SK-N-SH (cell line): ENCODE measurements at regions of chr1 and their contacts with region 1.

Region 1: DNA sequence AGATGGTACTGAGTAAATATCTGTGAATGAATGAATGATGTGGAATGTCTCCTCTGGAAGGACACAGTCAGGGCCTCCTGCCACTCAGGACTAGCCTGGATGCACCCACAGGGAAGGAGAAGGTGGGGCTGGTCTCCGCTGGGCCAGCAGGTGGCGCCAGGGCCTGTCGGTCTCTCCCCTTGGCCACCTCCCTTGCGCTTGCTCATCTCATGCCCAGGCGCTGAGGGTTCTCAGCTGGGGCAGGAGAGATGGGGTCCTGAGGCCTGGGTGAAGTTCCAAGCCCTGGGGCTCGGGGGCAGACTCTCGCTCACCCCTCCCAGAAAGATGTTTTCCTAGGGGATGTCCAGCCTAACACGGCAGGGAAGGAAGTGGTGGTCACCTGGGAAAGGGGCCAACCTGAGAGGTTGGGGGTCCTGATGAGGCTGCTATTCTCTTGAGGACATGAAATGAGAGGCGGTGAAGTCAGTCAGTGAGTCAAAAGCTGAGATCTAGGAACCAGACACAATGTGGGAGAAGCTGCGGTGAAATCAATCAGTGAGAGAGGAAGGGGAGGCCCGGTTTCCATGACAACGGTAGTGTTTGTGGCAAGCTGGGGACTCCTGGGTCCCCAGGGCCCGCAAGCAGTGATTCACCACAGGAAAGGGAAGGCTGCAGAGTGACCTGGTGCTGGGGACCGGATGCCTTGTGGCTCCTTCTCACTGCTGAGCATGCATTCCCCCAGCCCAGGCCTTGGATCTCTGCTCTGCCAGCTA is 14.6 kb upstream of the MEX3A start:
- DNase-seq: peak; percentile 89
- H3K4me3 ChIP-seq: no peak overlapping the region; a peak in 1 of 4 replicates
- H3K27ac ChIP-seq: peak overlapping the region; percentile 25 to 85; a peak in 3 of 4 replicates
- H3K4me1 ChIP-seq: peaks cover 13 to 23% of the 10 kb centered on the region in 2 experiments; a peak in 3 of 4 replicates
- H3K27me3 ChIP-seq: no peaks in the 10 kb centered on the region
- CTCF ChIP-seq: peak; percentile 96
- EP300 ChIP-seq: no peak
- RAD21 ChIP-seq: peak; percentile 96

Region 2: GRCh38 chr1:156114101-156114916 is 17.5 kb after region 1 on chr1 and contains the start of gene LMNA:
- CTCF ChIA-PET with region 1: interaction called, 1,559 read pairs
- POLR2A ChIA-PET with region 1: no interaction called
- DNase-seq: peak; percentile 87
- H3K4me3 ChIP-seq: peak within 1 kb of the TSS; percentile 74 to 94
- H3K27ac ChIP-seq: peak within 1 kb of the TSS; percentile 93 to 100
- H3K4me1 ChIP-seq: peaks cover 28 to 42% of the 10 kb centered on the region in 2 experiments; a peak in 3 of 4 replicates
- H3K27me3 ChIP-seq: no peaks in the 10 kb centered on the region
- CTCF ChIP-seq: 0 out of 2 replicates have a peak, but pooled peaks have one; percentile 6
- EP300 ChIP-seq: peak in 1 of 2 experiments; percentile 88; a peak in 1 of 4 replicates
- RAD21 ChIP-seq: no peak
- polyA plus RNA-seq, gene LMNA: 726 and 983 TPM in 2 replicates

Region 3: GRCh38 chr1:156499842-156500546 is 403.2 kb after region 1 on chr1:
- CTCF ChIA-PET with region 1: no interaction called
- POLR2A ChIA-PET with region 1: no interaction called
- DNase-seq: peak; percentile 75
- H3K4me3 ChIP-seq: peak overlapping the region; percentile 89 to 97
- H3K27ac ChIP-seq: peak overlapping the region; percentile 96 to 100
- H3K4me1 ChIP-seq: peaks cover 53 to 72% of the 10 kb centered on the region in 2 experiments
- H3K27me3 ChIP-seq: no peaks in the 10 kb centered on the region
- CTCF ChIP-seq: no peak
- EP300 ChIP-seq: no peak
- RAD21 ChIP-seq: no peak